Upper lobe of right lung (tissue), 1 donor: ENCODE measurements at regions of chr17 and their contacts with region 1.

Region 1: DNA sequence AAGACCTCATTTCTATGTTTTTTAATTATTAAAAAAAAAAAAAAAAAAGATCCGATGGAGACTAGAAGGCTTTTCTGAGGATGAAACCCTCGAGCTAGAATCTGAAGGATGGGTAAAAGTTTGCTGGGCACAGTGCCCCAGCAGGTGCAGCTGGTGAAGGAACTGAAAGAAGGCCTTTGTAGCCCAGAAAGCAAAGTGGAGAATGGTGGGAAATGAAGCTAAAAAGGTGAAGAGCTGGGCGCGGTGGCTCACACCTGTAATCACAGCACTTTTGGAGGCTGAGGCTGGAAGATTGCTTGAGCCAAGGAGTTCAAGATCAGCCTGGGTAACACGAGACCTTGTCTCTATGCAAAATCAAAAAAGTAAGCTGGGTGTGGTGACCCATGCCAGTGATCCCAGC is 50.3 kb upstream of the SEC14L1 start:
- DNase-seq: no peak
- ATAC-seq: no peak
- H3K4me3 ChIP-seq: no peak overlapping the region
- H3K27ac ChIP-seq: no peak overlapping the region
- H3K4me1 ChIP-seq: peaks cover 34% of the 10 kb centered on the region
- H3K27me3 ChIP-seq: no peaks in the 10 kb centered on the region
- CTCF ChIP-seq: no peak

Region 2: GRCh38 chr17:76623271-76624146 is 467.0 kb before region 1 on chr17:
- intact Hi-C with region 1: no loop called
- DNase-seq: peak; percentile 90
- ATAC-seq: peak; percentile 96
- H3K4me3 ChIP-seq: no peak overlapping the region
- H3K27ac ChIP-seq: no peak overlapping the region
- H3K4me1 ChIP-seq: peaks cover 7% of the 10 kb centered on the region
- H3K27me3 ChIP-seq: no peaks in the 10 kb centered on the region
- CTCF ChIP-seq: peak; percentile 98

Region 3: GRCh38 chr17:77200711-77201110 is 110.2 kb after region 1 on chr17:
- intact Hi-C with region 1: no loop called
- DNase-seq: no peak
- ATAC-seq: peak; percentile 70
- H3K4me3 ChIP-seq: no peak overlapping the region
- H3K27ac ChIP-seq: no peak overlapping the region
- H3K4me1 ChIP-seq: peaks cover 4% of the 10 kb centered on the region
- H3K27me3 ChIP-seq: no peaks in the 10 kb centered on the region
- CTCF ChIP-seq: peak; percentile 12

Region 4: DNA sequence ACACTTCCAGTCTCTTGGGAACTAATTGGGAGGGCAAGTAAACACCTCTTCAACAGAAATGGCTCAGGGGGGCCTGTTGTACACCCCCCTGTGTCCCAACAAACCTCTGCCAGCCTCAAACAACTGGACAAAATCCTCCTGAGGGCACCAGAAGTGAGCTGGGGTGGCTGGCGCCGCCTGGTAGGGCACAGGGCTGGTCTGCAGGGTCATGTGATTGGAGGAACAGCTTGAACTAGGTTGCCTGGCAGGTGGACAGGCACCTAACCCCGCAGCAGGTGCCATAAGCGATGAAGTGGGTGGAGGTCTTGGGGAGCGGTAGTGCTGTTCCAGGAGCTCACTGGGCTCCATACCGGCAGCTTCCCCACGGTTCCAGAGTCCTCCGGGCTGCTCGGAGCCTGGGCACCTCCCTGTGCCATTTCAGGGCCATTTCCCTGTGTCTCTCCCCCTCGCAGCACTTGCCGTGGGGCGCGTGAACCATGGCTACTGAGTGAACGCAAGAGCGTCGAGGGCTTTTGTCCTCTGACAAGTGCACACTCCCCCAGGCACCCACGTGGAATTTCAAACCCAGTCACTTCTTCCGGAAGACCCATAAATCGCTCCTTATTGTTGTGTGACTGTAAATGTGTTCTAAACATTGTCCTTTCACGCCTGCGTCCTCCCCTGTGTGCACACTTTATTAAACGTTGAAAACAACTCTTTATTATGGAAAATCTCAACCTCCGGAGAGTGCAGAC is 151.8 kb after region 1 on chr17:
- intact Hi-C with region 1: loop called (anchors 5 kb)
- DNase-seq: no peak
- ATAC-seq: no peak
- H3K4me3 ChIP-seq: no peak overlapping the region
- H3K27ac ChIP-seq: no peak overlapping the region
- H3K4me1 ChIP-seq: peaks cover 7% of the 10 kb centered on the region
- H3K27me3 ChIP-seq: no peaks in the 10 kb centered on the region
- CTCF ChIP-seq: no peak